Activated CD4-positive, alpha-beta T cell treated with anti-CD3 and anti-CD28 coated beads, Interleukin-2, amount 10 ng/mL, durations not matched to agents 7 days and 5 days (primary cell): ENCODE measurements at regions of chr5 and their contacts with region 1.

Region 1: GRCh38 chr5:10627160-10627701 is 63.4 kb downstream of the ANKRD33B start:
- DNase-seq: no peak
- H3K4me3 Mint-ChIP-seq: peak overlapping the region; percentile 70
- H3K27ac Mint-ChIP-seq: peak overlapping the region; percentile 78
- H3K4me1 Mint-ChIP-seq: peaks cover 29% of the 10 kb centered on the region
- H3K27me3 Mint-ChIP-seq: peaks cover 5% of the 10 kb centered on the region

Region 2: DNA sequence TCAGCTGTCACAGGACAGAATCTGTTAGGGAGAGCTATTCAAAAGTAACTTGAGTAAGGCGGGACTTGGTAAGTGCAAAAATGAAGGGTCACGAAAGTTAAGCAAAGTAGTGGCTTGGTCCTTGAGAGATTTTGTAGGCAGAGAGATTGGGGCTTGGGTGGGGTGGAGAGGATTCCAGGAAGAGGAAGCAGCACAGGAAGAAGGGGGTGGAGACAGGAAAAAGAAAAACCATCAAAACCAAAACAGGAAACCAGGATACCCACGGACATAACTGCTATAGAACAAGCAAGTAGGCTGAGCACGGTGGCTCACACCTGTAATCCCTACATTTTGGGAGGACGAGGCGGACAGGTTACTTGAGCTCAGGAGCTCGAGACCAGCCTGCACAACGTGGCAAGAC is 181.9 kb before region 1 on chr5:
- CTCF ChIA-PET with region 1: interaction called, 17 read pairs
- POLR2A ChIA-PET with region 1: no interaction called
- DNase-seq: peak; percentile 46
- H3K4me3 Mint-ChIP-seq: peak overlapping the region; percentile 43
- H3K27ac Mint-ChIP-seq: peak overlapping the region; percentile 71
- H3K4me1 Mint-ChIP-seq: peaks cover 48% of the 10 kb centered on the region
- H3K27me3 Mint-ChIP-seq: peaks cover 10% of the 10 kb centered on the region

Region 3: GRCh38 chr5:10452768-10453331 is 174.4 kb before region 1 on chr5:
- CTCF ChIA-PET with region 1: interaction called, 17 read pairs
- POLR2A ChIA-PET with region 1: no interaction called
- DNase-seq: peak; percentile 50
- H3K4me3 Mint-ChIP-seq: no peak overlapping the region
- H3K27ac Mint-ChIP-seq: no peak overlapping the region
- H3K4me1 Mint-ChIP-seq: peaks cover 6% of the 10 kb centered on the region
- H3K27me3 Mint-ChIP-seq: no peaks in the 10 kb centered on the region

Region 4: GRCh38 chr5:10607666-10608073 is 19.6 kb before region 1 on chr5:
- CTCF ChIA-PET with region 1: interaction called, 15 read pairs
- POLR2A ChIA-PET with region 1: no interaction called
- DNase-seq: no peak
- H3K4me3 Mint-ChIP-seq: no peak overlapping the region
- H3K27ac Mint-ChIP-seq: no peak overlapping the region
- H3K4me1 Mint-ChIP-seq: peaks cover 14% of the 10 kb centered on the region
- H3K27me3 Mint-ChIP-seq: no peaks in the 10 kb centered on the region

Region 5: DNA sequence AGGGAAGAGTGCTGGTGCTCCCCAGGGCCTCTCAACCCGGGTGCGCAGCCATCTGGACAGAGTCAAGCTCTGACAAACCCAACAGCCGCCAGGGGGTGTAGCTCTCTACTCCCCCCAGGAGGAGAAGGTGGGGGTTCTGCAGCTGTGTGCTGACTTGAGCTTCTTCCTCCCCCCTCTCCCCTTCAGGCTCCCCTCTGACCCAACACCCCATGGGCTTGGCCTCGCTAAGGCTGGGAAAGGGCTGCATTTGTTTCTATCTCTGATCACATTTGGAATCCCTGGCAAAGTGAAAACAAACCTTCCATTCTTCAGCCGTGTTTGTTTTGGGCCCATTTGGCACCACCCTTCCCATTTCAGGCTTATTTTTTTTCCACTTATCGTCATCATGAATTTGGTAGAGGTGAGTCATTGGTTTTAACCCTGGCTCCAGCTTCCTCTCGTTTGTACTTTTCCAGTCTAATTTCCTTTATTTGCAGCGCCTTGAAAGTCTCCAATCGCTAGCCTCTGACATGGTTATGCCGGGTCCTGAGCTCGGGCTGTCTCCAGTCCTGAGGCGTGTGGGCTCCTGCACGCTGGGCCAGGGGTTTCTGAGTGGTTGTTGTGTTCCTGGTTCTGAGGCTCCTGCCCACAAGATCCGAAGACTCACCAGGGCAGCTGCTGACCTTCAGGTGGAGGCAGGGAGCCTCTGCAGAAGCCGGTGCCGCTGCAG is 97.7 kb after region 1 on chr5:
- CTCF ChIA-PET with region 1: no interaction called
- POLR2A ChIA-PET with region 1: no interaction called
- DNase-seq: no peak
- H3K4me3 Mint-ChIP-seq: no peak overlapping the region
- H3K27ac Mint-ChIP-seq: no peak overlapping the region
- H3K4me1 Mint-ChIP-seq: peaks cover 6% of the 10 kb centered on the region
- H3K27me3 Mint-ChIP-seq: no peaks in the 10 kb centered on the region